MCF 10A (cell line): ENCODE measurements at regions of chr1 and their contacts with region 1.

Region 1: GRCh38 chr1:44730741-44731512 is at the start of gene RNU5D-1:
- DNase-seq: peak; percentile 97
- H3K4me3 Mint-ChIP-seq: peak within 1 kb of the TSS; percentile 51
- H3K27ac Mint-ChIP-seq: peak within 1 kb of the TSS; percentile 100
- H3K4me1 Mint-ChIP-seq: peaks cover 26% of the 10 kb centered on the region
- H3K27me3 Mint-ChIP-seq: no peaks in the 10 kb centered on the region
- CTCF ChIP-seq: peak; percentile 77
- total RNA-seq, gene RNU5D-1: not detected in 2 replicates

Region 2: GRCh38 chr1:44747878-44748277 is 17.0 kb after region 1 on chr1:
- CTCF ChIA-PET with region 1: interaction called, 18 read pairs
- POLR2A ChIA-PET with region 1: interaction called, 17 read pairs
- intact Hi-C with region 1: no loop called
- DNase-seq: no peak
- H3K4me3 Mint-ChIP-seq: no peak overlapping the region
- H3K27ac Mint-ChIP-seq: no peak overlapping the region
- H3K4me1 Mint-ChIP-seq: peaks cover 1% of the 10 kb centered on the region
- H3K27me3 Mint-ChIP-seq: no peaks in the 10 kb centered on the region
- CTCF ChIP-seq: no peak

Region 3: DNA sequence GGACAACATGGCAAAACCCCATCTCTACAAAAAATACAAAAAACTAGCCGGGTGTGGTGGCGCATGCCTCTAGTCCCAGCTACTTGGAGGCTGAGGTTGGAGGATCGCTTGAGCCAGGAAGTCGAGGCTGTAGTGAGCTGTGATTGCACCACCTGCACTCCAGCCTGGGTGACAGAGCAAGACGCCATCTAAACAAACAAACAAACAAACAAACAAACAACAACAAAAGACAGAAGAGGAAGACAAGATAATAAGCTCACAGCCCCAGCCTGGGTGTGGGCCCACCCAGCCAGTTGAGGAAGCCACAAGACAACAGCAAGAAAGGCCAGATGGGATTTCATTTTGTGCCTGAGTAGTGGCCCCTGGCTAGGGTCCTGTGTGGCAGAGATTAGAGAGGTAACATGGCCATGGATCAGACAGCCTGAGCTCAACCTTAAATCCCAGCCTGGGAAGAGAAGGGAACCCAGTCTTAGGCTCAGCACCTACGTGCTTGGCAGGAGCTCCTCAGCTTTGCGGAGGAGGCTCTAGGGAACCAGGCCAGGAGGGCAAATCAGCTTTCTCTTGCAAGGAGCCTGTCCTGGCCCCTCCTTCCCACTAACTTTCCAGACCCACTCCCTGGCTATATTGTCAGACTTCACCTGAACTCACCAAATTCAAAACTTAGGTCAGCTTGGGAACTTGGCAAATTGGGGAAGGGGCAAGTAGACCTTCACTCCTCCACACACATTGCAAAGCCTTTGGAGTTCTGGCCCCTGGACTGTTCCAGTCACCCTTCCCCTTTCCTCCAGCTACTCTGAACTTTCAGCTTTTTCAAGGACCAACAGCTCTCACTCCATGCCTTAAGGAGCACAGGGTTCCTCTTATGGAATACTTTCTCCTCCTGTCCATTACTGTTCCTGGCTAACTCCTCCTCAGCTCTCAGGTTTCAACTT is 62.1 kb after region 1 on chr1:
- CTCF ChIA-PET with region 1: interaction called, 6 read pairs
- POLR2A ChIA-PET with region 1: interaction called, 15 read pairs
- intact Hi-C with region 1: no loop called
- DNase-seq: no peak
- H3K4me3 Mint-ChIP-seq: no peak overlapping the region
- H3K27ac Mint-ChIP-seq: peak overlapping the region; percentile 85
- H3K4me1 Mint-ChIP-seq: peaks cover 7% of the 10 kb centered on the region
- H3K27me3 Mint-ChIP-seq: no peaks in the 10 kb centered on the region
- CTCF ChIP-seq: no peak

Region 4: DNA sequence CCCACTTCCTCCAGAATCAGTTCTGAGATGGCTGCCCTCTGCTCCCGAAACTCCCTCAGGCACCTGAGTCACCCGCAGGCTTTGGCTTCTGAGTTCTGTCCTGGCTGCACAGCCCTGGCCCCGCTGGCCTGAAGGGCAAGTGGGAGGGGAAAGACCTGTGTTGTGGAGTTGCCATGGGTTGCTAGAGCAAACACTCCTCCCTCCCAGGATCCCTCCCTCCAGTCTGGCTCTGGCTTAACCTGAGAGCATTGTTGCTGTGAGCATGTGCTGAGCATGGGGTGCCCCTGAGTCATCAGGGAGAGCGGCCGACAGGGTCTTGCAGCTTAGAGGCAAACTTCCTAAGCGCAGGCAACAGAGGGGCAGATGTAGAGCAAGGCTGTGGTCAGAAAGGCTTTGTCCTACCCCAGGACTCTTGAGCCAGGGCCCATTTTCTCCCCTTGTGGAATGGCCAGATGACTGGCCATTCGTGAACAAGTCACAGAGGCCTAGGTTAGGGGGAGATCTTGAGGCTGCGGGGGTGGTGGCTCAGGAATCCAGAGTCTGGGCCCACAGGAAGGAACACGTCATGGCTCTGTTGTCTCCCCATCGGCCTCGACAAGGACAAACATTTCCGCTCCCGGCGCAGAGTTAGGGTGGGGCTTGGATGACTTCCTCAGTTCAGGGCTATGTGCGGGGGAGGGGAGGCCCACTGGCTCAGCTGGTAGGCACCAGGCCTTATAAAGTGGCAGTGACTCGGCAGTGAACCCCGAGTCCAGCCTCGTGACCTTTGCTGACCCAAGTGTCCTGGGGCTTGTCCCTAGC is 76.5 kb after region 1 on chr1 and contains the start of gene DYNLT4:
- CTCF ChIA-PET with region 1: interaction called, 3 read pairs
- POLR2A ChIA-PET with region 1: interaction called, 19 read pairs
- intact Hi-C with region 1: loop called (anchors 2 kb)
- DNase-seq: peak; percentile 99
- H3K4me3 Mint-ChIP-seq: peak within 1 kb of the TSS; percentile 52
- H3K27ac Mint-ChIP-seq: peak within 1 kb of the TSS; percentile 100
- H3K4me1 Mint-ChIP-seq: peaks cover 48% of the 10 kb centered on the region
- H3K27me3 Mint-ChIP-seq: no peaks in the 10 kb centered on the region
- CTCF ChIP-seq: no peak
- total RNA-seq, gene DYNLT4: not detected in 2 replicates

Region 5: DNA sequence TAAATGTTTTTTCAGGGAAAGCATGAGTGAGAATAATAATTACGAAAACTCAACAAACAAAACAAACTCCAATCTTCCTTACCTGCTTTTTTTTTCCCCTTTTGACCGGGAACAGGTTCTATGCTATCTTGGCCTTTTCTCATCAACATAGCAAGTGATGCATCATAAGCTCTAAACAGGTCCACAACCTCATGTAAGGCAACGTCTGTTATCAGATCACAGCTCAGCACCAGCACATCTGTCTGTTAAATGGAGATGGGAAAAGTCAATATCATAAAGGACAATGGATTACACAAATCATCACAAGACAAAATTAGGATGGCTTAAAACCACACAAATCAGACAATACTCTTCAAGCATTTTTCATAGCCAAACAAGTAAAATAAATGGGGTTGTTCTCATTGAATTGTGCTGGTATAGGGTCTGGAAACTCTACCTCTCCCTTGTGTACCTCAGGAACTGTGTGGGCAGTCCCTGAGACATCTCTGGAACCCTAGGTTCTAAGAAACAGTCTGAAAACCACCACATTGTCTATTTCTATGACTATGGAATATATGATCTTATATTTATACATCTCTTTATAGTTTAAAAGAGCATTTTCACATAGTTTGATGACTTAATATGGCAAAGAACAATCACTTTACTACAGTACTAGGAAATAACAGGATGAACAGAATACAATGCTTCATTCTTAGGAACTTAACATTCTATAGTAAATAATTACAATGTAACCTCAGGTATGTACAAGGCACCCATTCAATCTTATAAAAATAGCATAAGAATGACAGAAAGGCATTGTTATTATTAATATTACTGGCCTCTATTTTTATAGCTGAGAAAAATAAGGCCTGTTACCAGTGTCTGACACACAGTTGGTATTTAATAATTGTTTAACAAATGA is 210.7 kb after region 1 on chr1:
- CTCF ChIA-PET with region 1: no interaction called
- POLR2A ChIA-PET with region 1: no interaction called
- intact Hi-C with region 1: no loop called
- DNase-seq: no peak
- H3K4me3 Mint-ChIP-seq: no peak overlapping the region
- H3K27ac Mint-ChIP-seq: no peak overlapping the region
- H3K4me1 Mint-ChIP-seq: no peaks in the 10 kb centered on the region
- H3K27me3 Mint-ChIP-seq: no peaks in the 10 kb centered on the region
- CTCF ChIP-seq: no peak

Region 6: DNA sequence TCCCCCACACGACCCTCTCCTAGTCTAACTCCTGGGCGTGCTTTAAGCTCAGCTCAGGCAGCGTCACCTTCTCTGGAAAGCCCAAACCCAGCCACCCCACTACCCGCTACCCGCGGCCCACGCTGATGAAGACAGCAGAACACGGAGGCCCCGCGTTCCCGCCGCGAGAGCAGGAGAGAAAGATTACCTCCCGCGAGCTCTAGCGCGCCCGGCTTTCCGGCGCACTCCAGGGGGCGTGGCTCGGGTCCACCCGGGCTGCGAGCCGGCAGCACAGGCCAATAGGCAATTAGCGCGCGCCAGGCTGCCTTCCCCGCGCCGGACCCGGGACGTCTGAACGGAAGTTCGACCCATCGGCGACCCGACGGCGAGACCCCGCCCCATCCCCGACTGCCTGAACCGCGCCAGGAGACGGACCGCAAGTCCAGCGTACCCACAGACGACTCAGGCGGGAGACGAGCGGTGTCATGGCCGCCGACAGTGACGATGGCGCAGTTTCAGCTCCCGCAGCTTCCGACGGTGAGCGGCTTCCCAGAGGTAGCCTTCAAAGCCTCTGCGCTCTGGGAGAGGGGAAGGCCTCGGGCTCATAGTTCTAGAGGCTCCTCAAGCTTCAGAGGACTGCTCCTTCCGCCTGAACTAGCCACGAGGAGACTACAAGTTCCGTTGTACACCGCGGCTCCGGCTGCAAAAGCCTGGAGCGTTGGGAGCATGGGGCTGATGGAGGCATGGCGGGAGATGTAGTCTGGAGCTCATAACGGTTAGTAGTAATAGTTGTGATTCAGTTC is 609.1 kb after region 1 on chr1 and contains the starts of genes MUTYH and TOE1:
- CTCF ChIA-PET with region 1: interaction called, 4 read pairs
- POLR2A ChIA-PET with region 1: interaction called, 11 read pairs
- intact Hi-C with region 1: no loop called
- DNase-seq: peak; percentile 89
- H3K4me3 Mint-ChIP-seq: peak within 1 kb of the TSS; percentile 93
- H3K27ac Mint-ChIP-seq: peak within 1 kb of the TSS; percentile 93
- H3K4me1 Mint-ChIP-seq: peaks cover 4% of the 10 kb centered on the region
- H3K27me3 Mint-ChIP-seq: no peaks in the 10 kb centered on the region
- CTCF ChIP-seq: no peak
- total RNA-seq, gene MUTYH: 31.2 and 31.3 TPM in 2 replicates
- total RNA-seq, gene TOE1: 11.1 and 13.3 TPM in 2 replicates